HCT116 (cell line): ENCODE measurements at regions of chr10 and their contacts with region 1.

Region 1: GRCh38 chr10:102225646-102226541 is at the start of gene ELOVL3:
- DNase-seq: peak; percentile 96
- ATAC-seq: peak; percentile 84
- H3K4me3 ChIP-seq: peak within 1 kb of the TSS; percentile 19 to 51
- H3K27ac ChIP-seq: no peak within 1 kb of the TSS; the same call in 1 of the 2 replicates
- H3K4me1 ChIP-seq: peaks cover 17 to 28% of the 10 kb centered on the region in 2 experiments
- H3K27me3 ChIP-seq: no peaks in the 10 kb centered on the region
- CTCF ChIP-seq: no peak
- POLR2A ChIP-seq: peak; percentile 80
- RAD21 ChIP-seq: no peak
- total RNA-seq, gene ELOVL3: 5.5 TPM

Region 2: GRCh38 chr10:102167861-102168260 is 58.0 kb before region 1 on chr10:
- CTCF ChIA-PET with region 1: interaction called, 80 read pairs
- POLR2A ChIA-PET with region 1: interaction called, 6 read pairs
- RAD21 ChIA-PET with region 1: interaction called, 13 to 16 read pairs
- intact Hi-C with region 1: loop called (anchors 1 kb)
- DNase-seq: no peak
- ATAC-seq: no peak
- H3K4me3 ChIP-seq: no peak overlapping the region
- H3K27ac ChIP-seq: no peak overlapping the region
- H3K4me1 ChIP-seq: peaks cover 4 to 6% of the 10 kb centered on the region in 2 experiments; a peak in 2 of 4 replicates
- H3K27me3 ChIP-seq: no peaks in the 10 kb centered on the region
- CTCF ChIP-seq: no peak
- POLR2A ChIP-seq: no peak
- RAD21 ChIP-seq: no peak

Region 3: DNA sequence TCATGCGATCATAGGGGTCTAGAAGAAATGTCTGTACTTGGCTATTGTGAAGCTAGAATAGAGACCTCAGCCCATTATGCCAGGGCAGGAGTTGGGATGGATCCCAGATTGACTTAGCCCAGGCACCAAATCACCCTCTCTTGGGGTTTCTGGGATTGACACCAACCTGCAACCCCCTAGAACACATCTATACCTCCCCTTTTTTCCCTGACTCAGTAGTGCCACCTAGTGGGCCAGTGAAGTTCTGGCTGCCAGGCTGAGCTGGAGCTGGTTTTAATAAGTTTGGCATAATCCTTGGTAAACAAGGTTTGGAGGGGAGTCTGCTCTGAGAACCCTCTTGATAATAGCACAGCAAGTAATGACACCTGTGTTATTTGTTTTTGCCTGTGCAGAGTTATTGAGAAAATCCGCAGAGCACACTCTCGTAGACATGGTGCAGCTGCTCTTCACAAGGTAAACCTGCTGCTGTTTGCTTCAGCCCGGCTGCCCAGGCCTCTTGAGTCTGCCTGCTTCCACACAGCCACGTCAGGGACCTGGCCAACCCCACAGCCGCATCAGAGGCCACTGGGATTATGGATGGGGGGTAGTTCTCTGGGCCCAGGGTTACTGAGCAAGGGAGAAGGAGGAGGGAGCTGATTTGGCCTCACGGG is 126.3 kb after region 1 on chr10:
- CTCF ChIA-PET with region 1: interaction called, 625 read pairs
- POLR2A ChIA-PET with region 1: interaction called, 28 read pairs
- RAD21 ChIA-PET with region 1: interaction called, 50 to 57 read pairs
- intact Hi-C with region 1: loop called (anchors 1 kb)
- DNase-seq: peak; percentile 53
- ATAC-seq: peak; percentile 81
- H3K4me3 ChIP-seq: no peak overlapping the region
- H3K27ac ChIP-seq: no peak overlapping the region
- H3K4me1 ChIP-seq: peaks cover 0 to 4% of the 10 kb centered on the region in 2 experiments; a peak in 2 of 4 replicates
- H3K27me3 ChIP-seq: no peaks in the 10 kb centered on the region
- CTCF ChIP-seq: peak; percentile 93 to 100 (median 100)
- POLR2A ChIP-seq: no peak
- RAD21 ChIP-seq: peak; percentile 87

Region 4: DNA sequence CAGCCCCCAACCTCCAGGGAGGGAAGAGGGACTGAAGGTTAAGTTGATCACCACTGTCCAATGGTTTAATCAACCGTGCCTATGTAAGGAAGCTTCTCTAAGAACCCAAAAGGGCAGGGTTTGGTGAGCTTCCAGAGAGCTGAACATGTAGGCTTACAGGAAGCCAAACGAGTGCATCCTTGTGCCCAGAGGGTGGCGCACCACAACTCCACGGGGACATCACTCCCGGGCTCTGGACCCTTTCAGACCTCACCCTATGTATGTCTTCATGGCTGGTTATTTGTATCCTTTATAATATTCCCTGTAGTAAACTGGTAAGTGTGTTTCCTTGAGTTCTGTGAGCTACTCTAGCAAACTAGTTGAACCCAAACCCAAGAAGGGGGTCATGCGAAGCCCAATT is 158.2 kb after region 1 on chr10:
- CTCF ChIA-PET with region 1: interaction called, 41 read pairs
- POLR2A ChIA-PET with region 1: no interaction called
- RAD21 ChIA-PET with region 1: no interaction called
- intact Hi-C with region 1: no loop called
- DNase-seq: no peak
- ATAC-seq: peak; percentile 74
- H3K4me3 ChIP-seq: no peak overlapping the region
- H3K27ac ChIP-seq: no peak overlapping the region
- H3K4me1 ChIP-seq: no peaks in the 10 kb centered on the region
- H3K27me3 ChIP-seq: no peaks in the 10 kb centered on the region
- CTCF ChIP-seq: peak; percentile 34 to 61 (median 45); a peak in 5 of 6 replicates
- POLR2A ChIP-seq: no peak
- RAD21 ChIP-seq: peak; percentile 46

Region 5: GRCh38 chr10:102408728-102409603 is 183.1 kb after region 1 on chr10:
- CTCF ChIA-PET with region 1: interaction called, 41 read pairs
- POLR2A ChIA-PET with region 1: interaction called, 8 read pairs
- RAD21 ChIA-PET with region 1: interaction called, 4 to 9 read pairs
- intact Hi-C with region 1: loop called (anchors 1 kb)
- DNase-seq: no peak
- ATAC-seq: peak; percentile 78
- H3K4me3 ChIP-seq: peak overlapping the region; percentile 56 to 74
- H3K27ac ChIP-seq: peak overlapping the region; percentile 50; the same call in 1 of the 2 replicates
- H3K4me1 ChIP-seq: peaks cover 11 to 21% of the 10 kb centered on the region in 2 experiments
- H3K27me3 ChIP-seq: peaks cover 3% of the 10 kb centered on the region; the same call in 1 of the 2 replicates
- CTCF ChIP-seq: no peak
- POLR2A ChIP-seq: no peak
- RAD21 ChIP-seq: no peak

Region 6: DNA sequence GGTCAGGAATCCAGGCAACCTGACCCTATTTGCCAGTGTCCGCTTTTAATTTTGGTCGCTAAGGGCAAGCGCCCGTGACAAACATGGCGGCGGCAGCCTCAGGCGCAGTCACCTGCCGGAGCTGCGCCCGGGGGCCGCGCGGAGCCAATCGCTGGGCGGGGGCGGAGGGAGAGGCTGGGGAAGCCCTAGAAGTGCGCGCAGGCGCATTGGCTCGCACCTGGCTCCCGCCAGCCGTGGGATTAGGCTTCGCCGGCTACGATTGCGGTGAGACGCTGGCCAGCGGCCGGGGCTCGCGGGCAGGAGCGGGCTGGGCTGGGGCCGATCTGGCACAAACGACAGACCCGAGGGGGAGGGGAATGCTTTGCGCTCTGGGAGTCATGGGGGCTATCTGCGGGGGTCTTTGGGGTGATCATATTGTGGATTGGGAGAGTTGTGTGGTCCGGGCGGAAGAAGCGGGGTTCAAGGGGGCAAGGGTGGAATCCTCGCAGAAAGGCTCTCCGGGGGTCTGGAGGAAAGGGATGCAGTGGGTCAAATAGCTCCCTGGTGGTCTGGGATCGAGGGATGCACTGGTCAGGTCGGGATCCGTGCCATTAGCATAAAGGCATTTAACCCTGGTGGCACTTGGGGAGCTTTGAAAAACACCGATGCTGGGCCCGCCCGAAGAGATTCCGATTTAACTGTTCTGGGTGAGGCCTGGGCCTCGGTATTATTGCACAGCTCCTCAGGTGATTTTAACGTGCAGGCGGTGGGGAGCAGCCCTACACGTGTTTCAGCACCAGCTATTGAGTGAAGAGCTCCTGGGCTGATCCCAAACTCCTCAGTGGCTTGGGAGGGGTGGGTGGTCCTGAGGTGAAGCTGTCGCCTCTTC is 235.5 kb after region 1 on chr10:
- CTCF ChIA-PET with region 1: interaction called, 16 read pairs
- POLR2A ChIA-PET with region 1: no interaction called
- RAD21 ChIA-PET with region 1: no interaction called
- intact Hi-C with region 1: loop called (anchors 5 kb)
- DNase-seq: peak; percentile 87
- ATAC-seq: peak; percentile 85
- H3K4me3 ChIP-seq: peak overlapping the region; percentile 72 to 73
- H3K27ac ChIP-seq: peak overlapping the region; percentile 60
- H3K4me1 ChIP-seq: peaks cover 31 to 38% of the 10 kb centered on the region in 2 experiments
- H3K27me3 ChIP-seq: no peaks in the 10 kb centered on the region
- CTCF ChIP-seq: no peak
- POLR2A ChIP-seq: peak; percentile 80
- RAD21 ChIP-seq: no peak

Region 7: GRCh38 chr10:102583435-102584417 is 357.8 kb after region 1 on chr10:
- CTCF ChIA-PET with region 1: interaction called, 68 read pairs
- POLR2A ChIA-PET with region 1: no interaction called
- RAD21 ChIA-PET with region 1: interaction called, 4 to 9 read pairs
- intact Hi-C with region 1: loop called (anchors 1 kb)
- DNase-seq: peak; percentile 87
- ATAC-seq: peak; percentile 100
- H3K4me3 ChIP-seq: no peak overlapping the region
- H3K27ac ChIP-seq: no peak overlapping the region
- H3K4me1 ChIP-seq: peaks cover 0 to 3% of the 10 kb centered on the region in 2 experiments; a peak in 1 of 4 replicates
- H3K27me3 ChIP-seq: no peaks in the 10 kb centered on the region
- CTCF ChIP-seq: peak; percentile 85 to 98 (median 96)
- POLR2A ChIP-seq: no peak
- RAD21 ChIP-seq: peak; percentile 97